ENCODE measurements at regions of chr10 and their contacts with region 1.

Region 1: DNA sequence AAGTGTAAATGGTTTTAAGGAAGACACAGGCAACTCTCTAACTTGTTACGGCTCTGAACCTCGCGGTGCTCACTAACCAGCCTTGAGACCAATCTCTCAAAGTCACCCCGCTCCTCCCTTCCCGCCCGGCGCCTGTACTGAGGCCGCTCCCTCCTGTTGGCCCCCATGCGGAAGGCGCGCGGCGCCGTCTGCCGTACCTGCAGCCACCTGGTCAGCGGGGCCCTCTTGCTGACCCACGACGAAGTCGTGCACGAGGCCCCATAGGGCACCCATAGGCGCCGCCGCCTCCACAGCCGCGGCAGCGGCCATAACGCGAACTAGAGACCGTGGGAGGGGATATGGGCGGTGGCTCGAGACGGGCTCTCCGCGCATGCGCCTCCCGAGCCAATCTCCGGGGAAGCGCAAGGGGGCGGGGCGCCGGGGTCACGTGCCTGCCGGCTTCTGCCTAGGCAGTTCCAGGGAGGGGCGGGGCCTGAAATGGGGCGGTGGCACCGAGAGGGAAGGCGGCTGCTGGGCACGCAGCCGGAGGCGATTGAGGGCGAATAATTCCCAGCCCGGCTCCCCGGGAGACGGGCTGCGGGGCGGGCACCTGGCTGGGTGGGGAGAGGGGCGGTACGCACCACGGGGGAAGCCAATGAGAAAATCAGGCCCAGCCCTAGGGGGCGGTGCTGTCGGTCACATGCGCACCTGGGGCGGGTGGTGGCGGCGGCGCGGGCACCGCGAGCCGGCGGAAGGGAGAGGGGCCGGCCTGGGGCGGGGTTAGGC is at the start of gene MMS19:
- DNase-seq: peak; percentile 100
- H3K4me3 ChIP-seq: peak within 1 kb of the TSS; percentile 81 to 99
- H3K27ac ChIP-seq: peak within 1 kb of the TSS; percentile 81 to 94
- H3K4me1 ChIP-seq: peaks cover 7 to 12% of the 10 kb centered on the region in 2 donors
- H3K27me3 ChIP-seq: no peaks in the 10 kb centered on the region
- CTCF ChIP-seq: peak in 2 of 4 experiments; percentile 1 to 7
- POLR2A ChIP-seq: peak; percentile 66 to 75
- total RNA-seq, gene MMS19: 44.6 to 87.7 (median 73.7) TPM

Region 2: GRCh38 chr10:97543025-97543575 is 44.8 kb after region 1 on chr10:
- intact Hi-C with region 1: loop called (anchors 10 kb)
- DNase-seq: peak; percentile 84 to 94
- H3K4me3 ChIP-seq: no peak overlapping the region
- H3K27ac ChIP-seq: peak overlapping the region; percentile 96 to 97
- H3K4me1 ChIP-seq: peaks cover 22 to 38% of the 10 kb centered on the region in 2 donors
- H3K27me3 ChIP-seq: no peaks in the 10 kb centered on the region
- CTCF ChIP-seq: no peak
- POLR2A ChIP-seq: peak in 1 of 2 donors; percentile 21